IMR-90 (cell line): ENCODE measurements at regions of chr17 and their contacts with region 1.

Region 1: GRCh38 chr17:14926526-14927122 is 338.5 kb downstream of the PMP22 start:
- DNase-seq: peak; percentile 74
- ATAC-seq: peak; percentile 49; the same call in 1 of the 2 replicates
- H3K4me3 ChIP-seq: no peak overlapping the region
- H3K27ac ChIP-seq: no peak overlapping the region
- H3K4me1 ChIP-seq: no peaks in the 10 kb centered on the region
- H3K27me3 ChIP-seq: peaks cover 4% of the 10 kb centered on the region
- CTCF ChIP-seq: peak; percentile 89
- POLR2A ChIP-seq: 0 out of 2 replicates have a peak, but pooled peaks have one; percentile 31
- RAD21 ChIP-seq: peak; percentile 99

Region 2: DNA sequence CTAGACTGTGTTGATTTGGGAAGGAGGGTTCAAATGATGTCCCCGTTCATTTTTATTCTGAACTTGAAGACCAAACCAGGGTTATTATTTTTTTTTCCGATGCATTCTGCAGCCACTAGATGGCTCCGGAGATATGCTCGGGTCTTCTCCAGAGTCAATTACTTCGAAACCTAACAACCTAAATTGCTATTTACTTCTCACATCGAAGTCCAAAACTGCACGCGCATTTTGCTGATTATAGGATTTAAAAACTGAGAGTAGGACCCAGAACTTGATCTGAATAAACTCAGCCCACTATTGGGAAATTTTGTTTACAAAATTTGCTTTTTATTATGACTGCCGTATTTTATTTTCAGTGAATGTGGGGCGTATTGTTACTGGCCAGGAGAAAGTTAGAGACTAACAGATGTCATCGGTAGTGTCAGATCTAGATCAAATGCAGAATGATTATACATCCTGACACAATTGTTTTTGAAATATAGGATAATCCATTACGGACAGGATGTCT is 1588.7 kb before region 1 on chr17:
- CTCF ChIA-PET with region 1: no interaction called
- POLR2A ChIA-PET with region 1: no interaction called
- dilution Hi-C with region 1: no loop called
- in situ Hi-C with region 1: no loop called
- intact Hi-C with region 1: loop called (anchors 10 kb)
- DNase-seq: peak; percentile 78
- ATAC-seq: peak; percentile 84
- H3K4me3 ChIP-seq: peak overlapping the region; percentile 54
- H3K27ac ChIP-seq: no peak overlapping the region
- H3K4me1 ChIP-seq: peaks cover 5% of the 10 kb centered on the region
- H3K27me3 ChIP-seq: no peaks in the 10 kb centered on the region
- CTCF ChIP-seq: peak; percentile 92
- POLR2A ChIP-seq: peak; percentile 45; the same call in 1 of the 2 replicates
- RAD21 ChIP-seq: peak; percentile 93

Region 3: GRCh38 chr17:14373614-14374259 is 552.9 kb before region 1 on chr17:
- CTCF ChIA-PET with region 1: no interaction called
- POLR2A ChIA-PET with region 1: no interaction called
- dilution Hi-C with region 1: no loop called
- in situ Hi-C with region 1: no loop called
- intact Hi-C with region 1: loop called (anchors 5 kb)
- DNase-seq: peak; percentile 75
- ATAC-seq: peak; percentile 79
- H3K4me3 ChIP-seq: no peak overlapping the region
- H3K27ac ChIP-seq: no peak overlapping the region
- H3K4me1 ChIP-seq: peaks cover 11% of the 10 kb centered on the region
- H3K27me3 ChIP-seq: no peaks in the 10 kb centered on the region
- CTCF ChIP-seq: no peak
- POLR2A ChIP-seq: no peak
- RAD21 ChIP-seq: no peak

Region 4: GRCh38 chr17:14458724-14459123 is 467.9 kb before region 1 on chr17:
- CTCF ChIA-PET with region 1: no interaction called
- POLR2A ChIA-PET with region 1: no interaction called
- dilution Hi-C with region 1: no loop called
- in situ Hi-C with region 1: no loop called
- intact Hi-C with region 1: no loop called
- DNase-seq: no peak
- ATAC-seq: no peak
- H3K4me3 ChIP-seq: no peak overlapping the region
- H3K27ac ChIP-seq: no peak overlapping the region
- H3K4me1 ChIP-seq: no peaks in the 10 kb centered on the region
- H3K27me3 ChIP-seq: no peaks in the 10 kb centered on the region
- CTCF ChIP-seq: no peak
- POLR2A ChIP-seq: no peak
- RAD21 ChIP-seq: no peak

Region 5: DNA sequence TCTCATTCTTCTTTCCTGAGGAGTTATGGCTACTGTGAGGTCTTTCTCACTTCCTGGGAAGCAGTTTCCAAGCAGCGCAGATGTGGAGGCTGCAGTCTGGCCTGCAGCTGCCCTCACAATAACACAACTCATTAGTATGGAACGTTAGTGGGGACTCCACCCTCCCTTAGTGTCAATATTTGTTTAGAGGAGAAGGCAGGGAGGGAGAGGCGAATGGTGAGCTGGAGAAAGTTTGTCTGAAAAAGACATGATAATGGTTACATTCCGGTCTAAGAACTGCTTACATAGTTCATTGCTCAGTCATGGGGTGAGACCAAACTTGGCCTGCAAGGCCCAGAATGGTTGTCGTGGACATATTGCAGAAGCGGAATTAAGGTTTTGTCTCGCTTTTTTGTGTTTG is 455.6 kb before region 1 on chr17:
- CTCF ChIA-PET with region 1: no interaction called
- POLR2A ChIA-PET with region 1: no interaction called
- dilution Hi-C with region 1: no loop called
- in situ Hi-C with region 1: no loop called
- intact Hi-C with region 1: loop called (anchors 2 kb)
- DNase-seq: peak; percentile 94
- ATAC-seq: peak; percentile 97
- H3K4me3 ChIP-seq: no peak overlapping the region
- H3K27ac ChIP-seq: peak overlapping the region; percentile 81; the same call in 1 of the 2 replicates
- H3K4me1 ChIP-seq: peaks cover 10% of the 10 kb centered on the region
- H3K27me3 ChIP-seq: no peaks in the 10 kb centered on the region
- CTCF ChIP-seq: no peak
- POLR2A ChIP-seq: no peak
- RAD21 ChIP-seq: no peak